Ascending aorta (tissue), 2 donors: ENCODE measurements at regions of chr12 and their contacts with region 1.

Region 1: GRCh38 chr12:57520053-57520871 is at the start of gene DDIT3:
- DNase-seq: peak; percentile 98 to 100
- H3K4me3 ChIP-seq: peak within 1 kb of the TSS; percentile 73 to 91
- H3K27ac ChIP-seq: peak within 1 kb of the TSS; percentile 98 to 99
- H3K4me1 ChIP-seq: peaks cover 29 to 52% of the 10 kb centered on the region in 2 donors
- H3K27me3 ChIP-seq: no peaks in the 10 kb centered on the region
- CTCF ChIP-seq: no peak
- total RNA-seq, gene DDIT3: 0.64 TPM

Region 2: DNA sequence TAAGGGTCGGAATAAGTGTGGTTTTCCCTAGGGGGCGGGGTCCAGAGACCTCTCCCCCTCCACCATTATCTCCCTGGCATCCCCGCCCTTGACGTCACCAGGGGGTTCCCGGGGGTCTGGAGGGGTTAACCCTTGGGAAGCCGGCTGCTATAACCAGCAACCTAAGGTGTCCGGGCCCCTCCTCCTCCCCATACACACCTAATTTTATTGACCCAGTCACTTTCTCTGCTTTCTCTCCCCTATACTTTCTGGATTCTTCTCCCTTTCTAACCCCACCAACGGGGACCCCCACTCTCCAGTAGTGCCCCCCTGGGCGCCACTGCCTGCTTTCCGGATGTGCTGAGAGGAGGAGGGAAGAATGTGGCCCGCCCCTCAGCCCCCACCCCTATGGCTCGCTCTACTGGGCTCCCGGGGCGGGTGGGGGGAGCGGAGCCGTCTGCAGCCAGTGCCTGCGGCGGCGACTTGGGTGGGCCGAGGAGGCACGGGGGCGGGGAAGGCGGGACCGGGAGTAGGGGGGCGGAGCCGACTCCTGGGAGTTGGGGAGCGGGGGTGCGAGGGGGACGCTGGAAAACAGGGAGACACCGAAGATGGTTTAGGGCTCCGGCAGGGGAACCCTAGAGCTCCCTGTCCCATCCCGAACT is 58.9 kb before region 1 on chr12:
- intact Hi-C with region 1: loop called (anchors 1 kb)
- DNase-seq: peak in 1 of 2 donors; percentile 90
- H3K4me3 ChIP-seq: peak overlapping the region; percentile 71 to 89
- H3K27ac ChIP-seq: peak overlapping the region; percentile 76 to 87
- H3K4me1 ChIP-seq: peaks cover 3 to 30% of the 10 kb centered on the region in 2 donors
- H3K27me3 ChIP-seq: no peaks in the 10 kb centered on the region
- CTCF ChIP-seq: no peak

Region 3: DNA sequence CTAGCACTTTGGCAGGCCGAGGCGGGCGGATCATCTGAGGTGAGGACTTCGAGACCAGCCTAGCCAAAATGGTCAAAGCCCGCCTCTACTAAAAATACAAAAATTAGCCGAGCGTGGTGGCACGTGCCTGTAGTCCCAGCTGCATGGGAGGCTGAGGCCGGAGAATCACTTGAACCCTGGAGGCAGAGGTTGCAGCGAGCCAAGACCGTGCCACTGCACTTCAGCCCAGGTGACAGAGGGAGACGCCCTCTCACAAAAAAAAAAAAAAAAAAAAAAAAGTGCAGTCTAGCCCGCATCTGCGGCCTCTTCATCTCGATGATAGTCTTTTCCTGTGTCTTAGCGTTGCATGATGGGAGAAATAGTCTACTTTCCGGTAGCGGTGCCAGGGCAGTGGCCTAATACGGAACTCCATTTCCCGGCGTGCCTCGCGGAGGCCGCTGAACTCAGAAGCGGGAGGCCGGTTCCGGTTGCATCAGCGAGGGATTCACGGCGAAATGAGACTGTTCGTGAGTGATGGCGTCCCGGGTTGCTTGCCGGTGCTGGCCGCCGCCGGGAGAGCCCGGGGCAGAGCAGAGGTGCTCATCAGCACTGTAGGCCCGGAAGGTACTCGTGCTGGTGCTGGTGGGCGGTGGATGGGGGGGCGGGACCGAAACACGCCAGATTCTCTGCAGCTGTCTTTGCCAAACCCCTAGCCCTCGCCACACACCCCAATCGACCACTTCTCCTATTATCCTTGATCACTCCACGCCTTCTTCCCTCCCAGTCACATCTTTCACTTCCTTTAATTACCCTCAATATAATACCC is 32.5 kb before region 1 on chr12 and contains the start of gene MARS1:
- intact Hi-C with region 1: loop called (anchors 2 kb)
- DNase-seq: peak; percentile 82 to 98
- H3K4me3 ChIP-seq: peak within 1 kb of the TSS; percentile 75
- H3K27ac ChIP-seq: peak within 1 kb of the TSS; percentile 63 to 84
- H3K4me1 ChIP-seq: peaks cover 8 to 10% of the 10 kb centered on the region in 2 donors
- H3K27me3 ChIP-seq: no peaks in the 10 kb centered on the region
- CTCF ChIP-seq: no peak
- total RNA-seq, gene MARS1: 78.0 TPM

Region 4: DNA sequence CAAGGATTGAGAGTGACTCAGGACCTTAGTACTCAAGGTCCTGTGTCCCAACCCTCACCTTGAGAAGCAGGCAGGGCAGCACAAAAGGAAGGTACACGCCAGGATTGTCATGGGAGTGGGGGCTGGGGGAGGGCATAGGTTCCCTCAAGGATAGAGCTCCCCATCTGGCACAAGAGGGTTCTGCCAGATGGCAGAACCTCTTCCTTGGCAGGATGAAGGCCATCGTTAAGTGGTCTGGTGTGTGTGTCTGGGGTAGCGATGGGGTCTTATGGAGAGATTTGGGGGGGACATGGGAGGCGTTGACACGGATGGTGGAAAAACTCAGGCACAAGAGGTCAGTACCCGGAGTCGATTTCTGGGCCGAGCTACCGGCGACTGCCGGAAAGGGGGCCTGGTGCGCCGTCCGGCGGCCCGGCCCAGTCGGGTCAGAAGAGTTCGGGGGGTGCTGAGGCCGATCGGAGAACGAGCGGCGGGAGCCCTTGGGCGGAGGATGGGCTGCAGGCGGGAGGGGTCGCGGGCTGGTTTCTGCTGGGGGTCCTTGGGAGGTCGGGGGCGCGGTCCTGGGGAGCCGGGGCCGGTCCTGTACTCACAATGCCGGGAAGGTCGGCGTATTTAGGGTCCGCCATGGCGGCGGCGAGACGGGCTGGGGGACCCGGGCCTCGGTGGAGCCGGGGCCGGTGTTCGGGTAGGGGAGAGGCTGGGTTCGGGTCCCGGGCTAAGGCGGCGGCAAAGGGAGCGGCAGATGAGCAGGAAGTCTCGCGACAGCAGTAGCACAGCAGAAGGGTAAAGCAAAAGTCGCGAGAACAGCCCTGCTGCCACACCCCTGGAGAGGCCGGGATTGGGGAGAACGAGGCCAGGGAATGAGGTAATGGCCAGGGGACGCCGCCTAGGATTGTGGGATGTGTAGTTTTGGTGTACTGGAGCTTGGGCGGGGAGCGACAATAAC is 26.4 kb after region 1 on chr12 and contains the start of gene DCTN2:
- intact Hi-C with region 1: loop called (anchors 1 kb)
- DNase-seq: peak; percentile 94 to 98
- H3K4me3 ChIP-seq: peak within 1 kb of the TSS; percentile 97 to 98
- H3K27ac ChIP-seq: peak within 1 kb of the TSS; percentile 88 to 92
- H3K4me1 ChIP-seq: peaks cover 3 to 17% of the 10 kb centered on the region in 2 donors
- H3K27me3 ChIP-seq: no peaks in the 10 kb centered on the region
- CTCF ChIP-seq: no peak
- total RNA-seq, gene DCTN2: 116 TPM

Region 5: DNA sequence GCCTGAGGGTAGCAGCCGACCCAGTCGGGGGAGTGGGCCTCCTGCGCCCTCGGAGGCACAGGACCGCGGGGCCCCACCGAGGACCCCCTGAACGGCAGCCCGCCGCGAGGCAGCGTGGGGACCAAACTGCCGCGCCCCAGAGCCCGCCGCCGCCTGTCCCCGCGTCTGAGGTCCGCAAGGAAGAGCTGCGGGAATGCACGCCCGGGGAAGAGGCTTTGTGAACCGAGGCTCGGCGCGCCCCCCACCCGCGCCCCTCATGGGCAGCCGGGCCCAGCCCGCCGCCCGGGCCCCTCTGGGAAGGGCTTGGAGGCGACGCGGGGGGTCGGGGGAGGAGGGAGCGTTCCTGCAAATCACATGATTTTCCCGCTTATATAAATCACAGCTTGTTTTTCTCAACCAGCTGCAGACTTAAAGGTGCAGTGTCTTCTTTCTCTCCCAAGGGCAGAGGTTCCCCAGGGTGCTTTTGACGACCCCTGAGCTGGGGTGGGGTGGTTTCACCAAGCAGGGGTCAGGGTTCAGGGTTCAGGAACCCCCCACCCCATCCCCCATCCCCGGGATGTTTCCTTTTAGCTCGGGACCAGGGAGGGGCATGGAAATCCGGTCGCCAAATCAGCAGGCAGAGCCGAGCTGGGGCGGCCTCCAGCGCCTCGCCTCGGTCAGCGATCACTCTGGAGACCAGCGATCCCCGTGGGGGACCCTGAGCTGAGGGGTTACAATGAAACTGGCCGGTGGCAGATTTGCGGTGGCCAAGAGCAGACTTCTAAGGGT is 376.4 kb after region 1 on chr12:
- intact Hi-C with region 1: loop called (anchors 5 kb)
- DNase-seq: peak in 1 of 2 donors; percentile 87
- H3K4me3 ChIP-seq: peak overlapping the region; percentile 67 to 72
- H3K27ac ChIP-seq: peak overlapping the region; percentile 98 to 99
- H3K4me1 ChIP-seq: peaks cover 51 to 69% of the 10 kb centered on the region in 2 donors
- H3K27me3 ChIP-seq: no peaks in the 10 kb centered on the region
- CTCF ChIP-seq: peak in 2 of 3 experiments; percentile 29 to 67